ENCODE measurements at regions of chr18 and their contacts with region 1.

Region 1: GRCh38 chr18:47215554-47216138 is 35.8 kb downstream of the SKOR2 start:
- DNase-seq: no peak
- ATAC-seq: no peak
- H3K4me3 ChIP-seq: no peak overlapping the region
- H3K27ac ChIP-seq: no peak overlapping the region
- H3K4me1 ChIP-seq: no peaks in the 10 kb centered on the region
- H3K27me3 ChIP-seq: no peaks in the 10 kb centered on the region

Region 2: GRCh38 chr18:47247036-47247832 is 31.6 kb after region 1 on chr18:
- intact Hi-C with region 1: no loop called
- DNase-seq: no peak
- ATAC-seq: no peak
- H3K4me3 ChIP-seq: no peak overlapping the region
- H3K27ac ChIP-seq: no peak overlapping the region
- H3K4me1 ChIP-seq: no peaks in the 10 kb centered on the region
- H3K27me3 ChIP-seq: no peaks in the 10 kb centered on the region

Region 3: DNA sequence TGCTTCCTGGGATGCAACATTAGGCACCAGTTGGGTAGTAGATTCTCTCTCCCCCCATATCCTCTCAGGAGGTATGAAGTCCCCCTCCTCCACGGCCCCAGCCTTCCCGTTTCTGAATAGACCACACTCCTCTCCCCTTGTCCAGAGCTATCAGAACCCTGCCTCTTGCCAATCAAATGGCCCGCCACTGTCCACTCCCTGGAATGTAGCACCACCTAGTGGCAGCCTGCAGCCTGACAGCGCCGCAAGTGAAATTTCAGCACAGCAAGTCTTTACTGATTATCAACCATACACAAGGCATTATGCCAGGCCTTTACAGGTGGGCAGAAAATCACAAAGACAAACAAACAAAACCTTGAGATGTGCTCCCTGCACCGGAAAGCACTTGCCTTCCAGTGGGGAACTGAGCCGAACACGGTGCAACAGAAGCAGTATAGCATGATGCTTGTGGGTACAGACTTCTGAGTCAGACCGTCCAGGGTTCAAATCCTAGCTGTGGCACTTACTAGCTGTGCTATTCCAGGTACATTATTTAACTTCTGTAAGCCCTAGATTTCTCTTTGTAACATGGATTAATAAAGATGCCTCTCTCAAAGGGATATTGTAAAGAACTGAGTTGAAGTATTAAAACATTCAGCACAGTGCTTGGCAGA is 540.8 kb after region 1 on chr18:
- intact Hi-C with region 1: loop called in 1 of 2 experiments (anchors 10 kb)
- DNase-seq: no peak
- ATAC-seq: no peak
- H3K4me3 ChIP-seq: no peak overlapping the region
- H3K27ac ChIP-seq: no peak overlapping the region
- H3K4me1 ChIP-seq: no peaks in the 10 kb centered on the region
- H3K27me3 ChIP-seq: no peaks in the 10 kb centered on the region